CD4-positive, alpha-beta T cell (primary cell): ENCODE measurements at regions of chr16 and their contacts with region 1.

Region 1: GRCh38 chr16:85554112-85554813 is 58.9 kb upstream of the GSE1 start:
- DNase-seq: peak in 13 of 14 experiments; percentile 36 to 91 (median 51)
- ATAC-seq: peak; percentile 33
- H3K4me3 ChIP-seq: peak overlapping the region; percentile 88
- H3K4me3 Mint-ChIP-seq: peak overlapping the region; percentile 99
- H3K27ac ChIP-seq: peak overlapping the region; percentile 53 to 68
- H3K27ac Mint-ChIP-seq: peak overlapping the region; percentile 86
- H3K4me1 ChIP-seq: peaks cover 33% of the 10 kb centered on the region
- H3K4me1 Mint-ChIP-seq: peaks cover 34% of the 10 kb centered on the region
- H3K27me3 ChIP-seq: no peaks in the 10 kb centered on the region
- H3K27me3 Mint-ChIP-seq: no peaks in the 10 kb centered on the region
- CTCF ChIP-seq: no peak

Region 2: DNA sequence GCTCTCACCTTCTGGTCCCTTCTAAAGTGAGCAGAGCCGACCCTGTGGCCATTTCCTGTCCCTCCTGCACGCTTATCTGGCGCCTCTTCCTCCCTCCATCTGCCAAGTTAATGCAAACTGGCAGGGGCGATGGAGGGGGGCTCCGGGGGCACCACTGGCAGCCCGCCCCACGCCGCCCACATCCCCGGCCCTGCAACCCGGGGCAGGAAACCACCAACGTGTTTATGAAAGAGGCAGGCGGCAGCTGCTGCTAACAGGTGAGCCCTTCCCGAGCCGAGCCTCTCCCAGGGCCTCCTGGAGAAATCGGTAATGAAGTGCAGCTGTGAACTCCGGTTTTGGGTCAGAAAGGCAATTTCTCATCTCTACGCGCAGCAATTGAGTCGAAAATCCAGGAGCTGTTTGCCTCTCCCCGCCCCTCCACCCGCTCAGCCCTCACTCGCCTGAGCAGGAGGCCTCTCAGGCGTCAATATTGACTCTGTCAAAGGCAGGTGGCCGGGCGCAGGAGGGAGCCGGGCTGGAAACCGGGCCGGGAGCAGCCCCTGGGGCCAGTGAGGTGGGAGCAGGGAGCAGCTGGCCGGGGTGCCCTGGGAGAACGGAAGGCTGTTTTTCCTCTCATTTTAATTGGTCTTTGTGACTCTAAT is 105.6 kb before region 1 on chr16:
- CTCF ChIA-PET with region 1: no interaction called
- POLR2A ChIA-PET with region 1: interaction called, 18 read pairs
- intact Hi-C with region 1: no loop called
- DNase-seq: peak; percentile 30 to 76 (median 56)
- ATAC-seq: peak; percentile 82
- H3K4me3 ChIP-seq: peak overlapping the region; percentile 19
- H3K4me3 Mint-ChIP-seq: peak overlapping the region; percentile 44
- H3K27ac ChIP-seq: peak overlapping the region; percentile 34 to 62
- H3K27ac Mint-ChIP-seq: peak overlapping the region; percentile 87
- H3K4me1 ChIP-seq: peaks cover 50% of the 10 kb centered on the region
- H3K4me1 Mint-ChIP-seq: peaks cover 48% of the 10 kb centered on the region
- H3K27me3 ChIP-seq: no peaks in the 10 kb centered on the region
- H3K27me3 Mint-ChIP-seq: no peaks in the 10 kb centered on the region
- CTCF ChIP-seq: no peak

Region 3: DNA sequence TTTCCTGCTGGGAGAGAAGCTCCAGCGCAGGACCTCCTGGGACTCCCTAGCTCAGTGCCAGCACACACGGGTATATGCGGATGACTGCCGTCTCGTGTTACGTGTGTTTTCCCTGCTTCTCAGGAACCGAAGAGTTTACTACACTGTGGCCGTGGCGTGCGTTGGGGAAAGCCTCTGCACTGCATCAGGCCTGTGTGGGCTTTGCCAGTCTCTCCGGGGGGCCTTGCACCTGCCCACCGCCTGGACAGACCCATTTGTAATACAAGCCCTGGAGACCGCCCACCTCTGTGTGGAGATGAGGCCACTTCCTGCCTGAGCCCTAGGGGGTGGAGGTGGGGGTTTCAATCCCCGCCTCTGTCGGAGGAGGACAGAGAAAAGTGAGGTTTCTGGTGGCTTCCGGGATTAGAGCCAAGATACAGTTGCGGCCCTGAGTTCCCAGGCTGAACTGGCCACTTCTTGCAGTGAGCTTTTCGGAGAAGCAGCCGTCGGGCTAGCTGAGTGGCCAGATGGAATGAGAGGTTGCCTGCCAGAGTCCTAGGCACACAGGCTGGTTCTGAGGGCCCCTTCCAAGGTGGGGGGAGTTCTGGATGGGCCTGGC is 15.5 kb after region 1 on chr16:
- CTCF ChIA-PET with region 1: interaction called, 5 read pairs
- POLR2A ChIA-PET with region 1: interaction called, 16 read pairs
- intact Hi-C with region 1: no loop called
- DNase-seq: peak in 4 of 14 experiments; percentile 29 to 73 (median 46)
- ATAC-seq: peak; percentile 46
- H3K4me3 ChIP-seq: peak overlapping the region; percentile 15
- H3K4me3 Mint-ChIP-seq: peak overlapping the region; percentile 48
- H3K27ac ChIP-seq: no peak overlapping the region
- H3K27ac Mint-ChIP-seq: peak overlapping the region; percentile 75
- H3K4me1 ChIP-seq: peaks cover 72% of the 10 kb centered on the region
- H3K4me1 Mint-ChIP-seq: peaks cover 40% of the 10 kb centered on the region
- H3K27me3 ChIP-seq: no peaks in the 10 kb centered on the region
- H3K27me3 Mint-ChIP-seq: no peaks in the 10 kb centered on the region
- CTCF ChIP-seq: no peak

Region 4: DNA sequence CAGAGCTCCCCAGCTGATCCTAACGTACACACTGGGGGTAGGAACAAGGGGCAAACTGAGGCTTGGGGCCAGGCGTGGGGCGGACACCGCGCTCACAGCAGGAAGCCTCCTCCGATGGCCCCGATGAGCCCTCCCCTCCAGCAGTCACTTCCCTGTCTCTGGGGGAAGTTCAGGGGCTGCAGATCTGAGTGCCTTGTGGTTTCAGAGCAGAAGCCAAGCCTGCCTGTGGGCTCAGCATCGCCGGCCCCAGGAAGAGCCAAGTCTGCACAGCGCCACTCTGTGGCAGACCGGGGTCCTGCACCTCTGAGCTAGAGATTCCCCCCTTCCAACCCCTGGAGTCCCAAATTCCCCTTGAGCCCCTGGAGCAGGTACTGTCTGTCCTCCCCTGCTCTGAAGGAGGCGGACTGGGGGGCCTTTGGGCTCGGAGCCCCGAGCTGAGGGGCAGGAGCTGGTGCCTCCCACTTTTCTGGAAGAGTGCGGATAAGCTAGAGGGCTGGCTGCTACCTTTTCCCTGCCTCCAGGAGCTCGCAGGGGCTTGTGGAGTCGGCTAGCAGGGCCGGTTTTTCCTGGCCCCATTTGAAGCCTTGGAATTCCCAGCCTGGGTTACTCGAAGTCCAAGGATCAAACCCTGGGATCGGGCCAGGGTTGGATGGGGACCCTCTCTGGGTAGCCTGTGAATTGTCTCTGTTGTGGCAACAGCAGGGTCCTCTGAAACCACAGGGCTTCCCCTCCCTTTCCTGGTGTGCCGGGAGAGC is 61.8 kb after region 1 on chr16:
- CTCF ChIA-PET with region 1: interaction called, 12 read pairs
- POLR2A ChIA-PET with region 1: interaction called, 14 read pairs
- intact Hi-C with region 1: loop called in 1 of 2 experiments (anchors 2 kb)
- DNase-seq: peak; percentile 60 to 90 (median 70)
- ATAC-seq: peak; percentile 66
- H3K4me3 ChIP-seq: peak overlapping the region; percentile 17
- H3K4me3 Mint-ChIP-seq: peak overlapping the region; percentile 84
- H3K27ac ChIP-seq: no peak overlapping the region
- H3K27ac Mint-ChIP-seq: peak overlapping the region; percentile 46
- H3K4me1 ChIP-seq: peaks cover 59% of the 10 kb centered on the region
- H3K4me1 Mint-ChIP-seq: peaks cover 27% of the 10 kb centered on the region
- H3K27me3 ChIP-seq: peaks cover 6 to 7% of the 10 kb centered on the region in 2 experiments
- H3K27me3 Mint-ChIP-seq: peaks cover 23% of the 10 kb centered on the region
- CTCF ChIP-seq: peak; percentile 75